Naive thymus-derived CD4-positive, alpha-beta T cell (primary cell): ENCODE measurements at regions of chr13 and their contacts with region 1.

Region 1: DNA sequence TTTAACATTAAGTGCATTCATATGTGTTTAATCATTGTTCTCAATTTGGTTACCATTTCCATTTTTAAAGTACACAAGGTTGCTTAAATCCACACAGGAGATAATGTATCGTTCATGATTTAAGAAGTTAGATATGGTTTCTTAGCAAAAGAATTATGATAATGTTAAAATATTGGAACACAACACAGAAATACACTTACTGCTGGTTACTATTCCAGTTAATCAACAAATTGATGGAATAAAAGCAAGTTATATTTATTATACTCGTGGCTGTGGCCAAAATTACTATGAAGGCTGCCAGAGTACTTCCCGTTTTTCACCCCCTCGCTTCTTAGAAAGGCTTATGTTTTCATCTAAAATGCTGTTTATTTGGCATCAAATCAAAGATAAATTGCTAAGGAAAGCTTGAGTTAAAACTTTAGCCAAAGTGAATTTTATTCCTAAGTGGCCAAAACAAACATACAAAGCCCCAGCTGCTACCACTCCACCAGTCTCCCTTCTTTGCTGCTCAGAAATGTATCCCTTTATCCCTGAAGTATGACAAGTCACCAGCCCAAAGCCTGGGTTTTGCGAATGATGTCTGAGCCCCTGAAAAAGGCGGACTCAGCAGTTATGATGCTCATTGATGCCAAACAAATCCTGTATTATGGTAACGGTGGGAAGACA is 27.7 kb downstream of the LCP1 start:
- DNase-seq: no peak
- ATAC-seq: no peak
- H3K4me3 ChIP-seq: no peak overlapping the region
- H3K4me3 Mint-ChIP-seq: no peak overlapping the region
- H3K27ac ChIP-seq: no peak overlapping the region
- H3K27ac Mint-ChIP-seq: peak overlapping the region in 8 of 9 donors; percentile 70 to 95 (median 80)
- H3K4me1 ChIP-seq: peaks cover 2 to 3% of the 10 kb centered on the region in 2 donors
- H3K4me1 Mint-ChIP-seq: peaks cover 20 to 51% (median 39%) of the 10 kb centered on the region in 7 donors
- H3K27me3 ChIP-seq: no peaks in the 10 kb centered on the region
- H3K27me3 Mint-ChIP-seq: no peaks in the 10 kb centered on the region

Region 2: GRCh38 chr13:45422731-45423292 is 731.5 kb before region 1 on chr13:
- CTCF ChIA-PET with region 1: no interaction called
- POLR2A ChIA-PET with region 1: no interaction called
- intact Hi-C with region 1: no loop called
- DNase-seq: peak in 3 of 9 donors; percentile 23 to 33 (median 26)
- ATAC-seq: no peak
- H3K4me3 ChIP-seq: no peak overlapping the region
- H3K4me3 Mint-ChIP-seq: no peak overlapping the region
- H3K27ac ChIP-seq: no peak overlapping the region
- H3K27ac Mint-ChIP-seq: peak overlapping the region in 3 of 9 donors; percentile 6 to 41 (median 12)
- H3K4me1 ChIP-seq: no peaks in the 10 kb centered on the region
- H3K4me1 Mint-ChIP-seq: peaks cover 0 to 4% (median 0%) of the 10 kb centered on the region in 7 donors
- H3K27me3 ChIP-seq: no peaks in the 10 kb centered on the region
- H3K27me3 Mint-ChIP-seq: no peaks in the 10 kb centered on the region

Region 3: DNA sequence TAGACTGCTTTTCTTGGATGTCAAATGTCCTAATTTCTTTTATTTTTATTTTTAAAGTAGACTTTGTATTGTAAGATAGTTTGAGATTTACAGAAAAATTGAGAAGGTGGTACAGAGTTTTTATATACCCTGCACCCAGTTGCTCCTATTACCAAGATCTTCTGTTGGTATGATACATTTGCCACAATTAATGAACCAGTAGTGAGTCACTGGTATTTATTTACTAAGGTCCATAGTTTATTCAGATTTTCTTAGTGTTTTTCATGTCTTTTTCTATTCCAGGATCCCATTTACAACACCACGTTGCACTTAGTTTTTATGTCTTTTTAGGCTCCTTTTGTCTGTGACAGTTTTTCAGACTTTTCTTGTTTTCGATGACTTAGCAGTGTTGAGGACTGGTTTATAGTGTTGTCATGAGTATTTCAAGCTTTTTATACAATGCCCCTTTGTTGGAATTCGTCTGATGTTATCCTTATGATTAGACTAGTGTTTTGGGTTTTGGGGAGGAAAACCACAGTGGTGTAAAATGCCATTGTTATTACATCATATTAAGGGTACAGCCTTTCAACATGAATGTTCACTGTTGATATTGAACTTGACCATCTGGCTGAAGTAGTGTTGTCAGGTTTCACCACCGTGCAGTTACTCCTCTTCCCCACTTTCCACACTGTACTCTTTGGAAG is 653.6 kb before region 1 on chr13:
- CTCF ChIA-PET with region 1: no interaction called
- POLR2A ChIA-PET with region 1: no interaction called
- intact Hi-C with region 1: no loop called
- DNase-seq: no peak
- ATAC-seq: no peak
- H3K4me3 ChIP-seq: no peak overlapping the region
- H3K4me3 Mint-ChIP-seq: no peak overlapping the region
- H3K27ac ChIP-seq: peak overlapping the region; percentile 10
- H3K27ac Mint-ChIP-seq: peak overlapping the region in 7 of 9 donors; percentile 30 to 85 (median 62)
- H3K4me1 ChIP-seq: no peaks in the 10 kb centered on the region
- H3K4me1 Mint-ChIP-seq: peaks cover 0 to 16% (median 10%) of the 10 kb centered on the region in 7 donors
- H3K27me3 ChIP-seq: no peaks in the 10 kb centered on the region
- H3K27me3 Mint-ChIP-seq: no peaks in the 10 kb centered on the region

Region 4: GRCh38 chr13:46022481-46022880 is 131.8 kb before region 1 on chr13:
- CTCF ChIA-PET with region 1: no interaction called
- POLR2A ChIA-PET with region 1: no interaction called
- intact Hi-C with region 1: no loop called
- DNase-seq: no peak
- ATAC-seq: no peak
- H3K4me3 ChIP-seq: no peak overlapping the region
- H3K4me3 Mint-ChIP-seq: no peak overlapping the region
- H3K27ac ChIP-seq: no peak overlapping the region
- H3K27ac Mint-ChIP-seq: no peak overlapping the region
- H3K4me1 ChIP-seq: no peaks in the 10 kb centered on the region
- H3K4me1 Mint-ChIP-seq: peaks cover 2 to 24% (median 9%) of the 10 kb centered on the region in 7 donors
- H3K27me3 ChIP-seq: no peaks in the 10 kb centered on the region
- H3K27me3 Mint-ChIP-seq: no peaks in the 10 kb centered on the region

Region 5: DNA sequence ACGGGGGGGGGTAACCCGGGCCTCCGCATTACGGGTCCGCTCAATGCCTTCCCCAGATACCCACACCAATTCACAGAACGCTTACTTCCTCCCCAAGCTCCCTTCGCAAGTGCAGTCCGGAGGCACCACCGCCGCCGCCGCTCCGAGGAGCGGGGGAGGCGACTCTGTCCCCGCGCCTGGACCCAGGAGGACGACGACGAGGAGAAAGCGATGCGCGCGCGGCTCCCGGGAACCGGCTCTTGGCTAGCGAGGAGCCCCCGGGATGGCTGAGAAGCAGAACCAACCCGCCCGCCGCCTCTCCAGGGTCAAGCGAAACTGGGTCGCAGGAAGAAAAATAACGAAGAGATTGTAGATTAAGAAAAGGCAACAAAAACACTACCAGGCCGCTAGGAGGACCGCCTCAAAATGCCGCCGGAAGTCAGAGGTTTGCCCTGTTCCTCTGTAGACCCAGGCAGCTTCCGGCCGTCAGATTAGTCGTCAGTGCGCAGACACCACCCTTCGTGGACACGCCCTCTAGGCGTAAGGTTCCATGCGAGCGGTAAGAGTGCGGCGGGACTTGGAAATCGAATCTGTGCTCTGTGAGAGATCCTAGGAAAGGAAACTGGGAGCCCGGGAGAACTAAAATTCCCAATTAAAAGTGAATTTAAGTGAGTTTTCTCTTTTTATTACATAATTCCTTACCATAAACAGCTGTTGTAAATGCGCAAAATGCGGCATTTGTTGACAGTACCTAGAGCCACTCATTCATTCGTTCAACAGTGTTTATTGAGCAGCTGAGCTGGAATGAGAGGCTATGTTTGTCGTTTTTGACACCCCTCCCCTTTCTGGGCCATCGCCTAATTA is 101.7 kb before region 1 on chr13 and contains the start of gene ZC3H13:
- CTCF ChIA-PET with region 1: no interaction called
- POLR2A ChIA-PET with region 1: no interaction called
- intact Hi-C with region 1: no loop called
- DNase-seq: peak; percentile 75 to 95 (median 92)
- ATAC-seq: peak; percentile 100
- H3K4me3 ChIP-seq: peak within 1 kb of the TSS; percentile 89
- H3K4me3 Mint-ChIP-seq: peak within 1 kb of the TSS; percentile 87 to 96 (median 94)
- H3K27ac ChIP-seq: peak within 1 kb of the TSS; percentile 98
- H3K27ac Mint-ChIP-seq: peak within 1 kb of the TSS; percentile 93 to 99 (median 97)
- H3K4me1 ChIP-seq: peaks cover 22 to 26% of the 10 kb centered on the region in 2 donors
- H3K4me1 Mint-ChIP-seq: peaks cover 19 to 63% (median 46%) of the 10 kb centered on the region in 7 donors
- H3K27me3 ChIP-seq: no peaks in the 10 kb centered on the region
- H3K27me3 Mint-ChIP-seq: peaks cover 5 to 32% (median 15%) of the 10 kb centered on the region in 5 donors
- total RNA-seq, gene ZC3H13: 41.1 to 67.0 (median 46.5) TPM

Region 6: GRCh38 chr13:46137627-46138317 is 16.5 kb before region 1 on chr13:
- CTCF ChIA-PET with region 1: interaction called, 22 read pairs
- POLR2A ChIA-PET with region 1: interaction called, 6 read pairs
- intact Hi-C with region 1: loop called in 1 of 2 experiments (anchors 2 kb)
- DNase-seq: no peak
- ATAC-seq: no peak
- H3K4me3 ChIP-seq: no peak overlapping the region
- H3K4me3 Mint-ChIP-seq: no peak overlapping the region
- H3K27ac ChIP-seq: peak overlapping the region; percentile 27
- H3K27ac Mint-ChIP-seq: peak overlapping the region; percentile 15 to 83 (median 72)
- H3K4me1 ChIP-seq: peaks cover 0 to under 1% of the 10 kb centered on the region in 2 donors
- H3K4me1 Mint-ChIP-seq: peaks cover 0 to 43% (median 16%) of the 10 kb centered on the region in 7 donors
- H3K27me3 ChIP-seq: no peaks in the 10 kb centered on the region
- H3K27me3 Mint-ChIP-seq: no peaks in the 10 kb centered on the region